SK-N-SH (cell line): ENCODE measurements at regions of chr19 and their contacts with region 1.

Region 1: GRCh38 chr19:19488875-19489690 is 26.3 kb downstream of the TSSK6 start:
- DNase-seq: peak; percentile 82
- H3K4me3 ChIP-seq: peak overlapping the region in 1 of 2 experiments; percentile 19; a peak in 2 of 4 replicates
- H3K27ac ChIP-seq: peak overlapping the region; percentile 86 to 89
- H3K4me1 ChIP-seq: peaks cover 32 to 50% of the 10 kb centered on the region in 2 experiments
- H3K27me3 ChIP-seq: no peaks in the 10 kb centered on the region
- CTCF ChIP-seq: no peak
- EP300 ChIP-seq: 0 out of 4 replicates have a peak, but pooled peaks of 1 of the 2 experiments have one; percentile 33
- RAD21 ChIP-seq: no peak

Region 2: GRCh38 chr19:19361075-19361594 is 127.9 kb before region 1 on chr19:
- CTCF ChIA-PET with region 1: interaction called, 172 read pairs
- POLR2A ChIA-PET with region 1: no interaction called
- DNase-seq: peak; percentile 84
- H3K4me3 ChIP-seq: no peak overlapping the region
- H3K27ac ChIP-seq: no peak overlapping the region
- H3K4me1 ChIP-seq: no peaks in the 10 kb centered on the region
- H3K27me3 ChIP-seq: no peaks in the 10 kb centered on the region
- CTCF ChIP-seq: peak; percentile 76
- EP300 ChIP-seq: no peak
- RAD21 ChIP-seq: peak; percentile 55

Region 3: GRCh38 chr19:19374962-19375823 is 113.9 kb before region 1 on chr19:
- CTCF ChIA-PET with region 1: interaction called, 172 read pairs
- POLR2A ChIA-PET with region 1: no interaction called
- DNase-seq: no peak
- H3K4me3 ChIP-seq: no peak overlapping the region
- H3K27ac ChIP-seq: no peak overlapping the region
- H3K4me1 ChIP-seq: peaks cover 0 to 5% of the 10 kb centered on the region in 2 experiments; a peak in 1 of 4 replicates
- H3K27me3 ChIP-seq: no peaks in the 10 kb centered on the region
- CTCF ChIP-seq: no peak
- EP300 ChIP-seq: no peak
- RAD21 ChIP-seq: no peak

Region 4: GRCh38 chr19:19404879-19405860 is 83.9 kb before region 1 on chr19 and contains the start of gene GATAD2A:
- CTCF ChIA-PET with region 1: interaction called, 23 read pairs
- POLR2A ChIA-PET with region 1: interaction called, 4 read pairs
- DNase-seq: peak; percentile 98
- H3K4me3 ChIP-seq: peak within 1 kb of the TSS; percentile 86 to 97
- H3K27ac ChIP-seq: peak within 1 kb of the TSS; percentile 70 to 89
- H3K4me1 ChIP-seq: peaks cover 22 to 24% of the 10 kb centered on the region in 2 experiments; a peak in 3 of 4 replicates
- H3K27me3 ChIP-seq: no peaks in the 10 kb centered on the region
- CTCF ChIP-seq: peak; percentile 29; the same call in 1 of the 2 replicates
- EP300 ChIP-seq: no peak
- RAD21 ChIP-seq: 0 out of 2 replicates have a peak, but pooled peaks have one; percentile 16
- polyA plus RNA-seq, gene GATAD2A: 28.0 and 36.6 TPM in 2 replicates

Region 5: DNA sequence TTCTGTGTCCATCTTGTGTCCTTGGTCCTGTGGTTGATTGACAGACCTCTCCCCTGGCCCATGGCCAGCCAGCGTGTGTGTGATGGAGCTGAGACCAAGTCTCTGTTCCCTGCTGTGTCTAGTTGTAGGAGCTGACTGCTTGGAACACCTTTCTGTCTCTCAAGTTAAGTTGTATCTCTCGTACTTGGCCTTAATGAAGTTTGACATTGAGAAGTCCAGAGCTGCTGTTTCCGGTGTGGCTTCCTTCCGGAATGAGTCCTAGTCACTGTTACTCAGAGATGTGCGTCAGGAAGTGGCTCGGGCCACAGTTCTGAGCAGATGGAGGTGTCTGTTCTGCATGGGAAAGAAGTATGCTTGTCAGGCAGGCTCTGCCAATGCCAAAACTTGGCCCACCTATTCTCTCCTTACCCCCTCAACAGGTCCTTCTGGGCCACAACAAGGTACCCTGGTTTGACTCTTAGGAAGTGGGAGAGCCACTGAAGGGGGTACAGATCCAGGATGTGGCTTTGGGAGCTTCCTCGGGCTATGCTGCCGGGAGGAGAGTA is 29.3 kb before region 1 on chr19:
- CTCF ChIA-PET with region 1: interaction called, 11 read pairs
- POLR2A ChIA-PET with region 1: interaction called, 3 read pairs
- DNase-seq: no peak
- H3K4me3 ChIP-seq: peak overlapping the region in 1 of 2 experiments; percentile 33; a peak in 2 of 4 replicates
- H3K27ac ChIP-seq: peak overlapping the region; percentile 67 to 72
- H3K4me1 ChIP-seq: peaks cover 50 to 66% of the 10 kb centered on the region in 2 experiments
- H3K27me3 ChIP-seq: no peaks in the 10 kb centered on the region
- CTCF ChIP-seq: no peak
- EP300 ChIP-seq: no peak; a peak in 1 of 4 replicates
- RAD21 ChIP-seq: no peak

Region 6: DNA sequence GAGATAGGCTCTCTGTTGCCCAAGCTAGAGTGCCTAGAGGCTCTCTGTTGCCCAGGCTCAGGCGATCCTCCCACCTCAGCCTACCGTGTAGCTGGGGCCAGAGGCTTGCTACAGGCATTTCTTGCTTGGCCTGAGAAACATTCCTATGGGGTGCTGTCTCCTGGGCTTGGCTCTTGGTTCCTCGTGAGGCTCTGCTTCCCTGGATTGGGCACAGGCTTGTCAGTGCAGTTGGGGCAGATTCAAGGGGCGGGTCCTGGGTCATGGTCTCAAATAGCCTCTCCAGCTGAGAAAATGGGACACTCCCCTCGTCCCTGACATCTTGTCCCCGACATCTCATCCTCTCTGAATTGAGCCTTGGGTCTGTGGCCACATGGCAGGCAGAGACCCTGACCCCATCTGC is 21.3 kb after region 1 on chr19:
- CTCF ChIA-PET with region 1: interaction called, 25 read pairs
- POLR2A ChIA-PET with region 1: interaction called, 3 read pairs
- DNase-seq: no peak
- H3K4me3 ChIP-seq: no peak overlapping the region
- H3K27ac ChIP-seq: no peak overlapping the region
- H3K4me1 ChIP-seq: peaks cover 0 to 5% of the 10 kb centered on the region in 2 experiments; a peak in 1 of 4 replicates
- H3K27me3 ChIP-seq: no peaks in the 10 kb centered on the region
- CTCF ChIP-seq: no peak
- EP300 ChIP-seq: no peak
- RAD21 ChIP-seq: no peak

Region 7: GRCh38 chr19:19597809-19598306 is 108.8 kb after region 1 on chr19:
- CTCF ChIA-PET with region 1: no interaction called
- POLR2A ChIA-PET with region 1: no interaction called
- DNase-seq: no peak
- H3K4me3 ChIP-seq: no peak overlapping the region
- H3K27ac ChIP-seq: no peak overlapping the region
- H3K4me1 ChIP-seq: peaks cover 0 to 8% of the 10 kb centered on the region in 2 experiments; a peak in 1 of 4 replicates
- H3K27me3 ChIP-seq: no peaks in the 10 kb centered on the region
- CTCF ChIP-seq: no peak
- EP300 ChIP-seq: no peak
- RAD21 ChIP-seq: no peak